Activated CD4-positive, alpha-beta T cell treated with anti-CD3 and anti-CD28 coated beads, Interleukin-2, amount 10 ng/mL, durations not matched to agents 24 days and 14 days (primary cell): ENCODE measurements at regions of chr19 and their contacts with region 1.

Region 1: GRCh38 chr19:8654591-8655339 is 24.3 kb downstream of the NFILZ start:
- DNase-seq: peak; percentile 88
- H3K4me3 Mint-ChIP-seq: peak overlapping the region; percentile 67
- H3K27ac Mint-ChIP-seq: peak overlapping the region; percentile 20
- H3K4me1 Mint-ChIP-seq: peaks cover 9% of the 10 kb centered on the region
- H3K27me3 Mint-ChIP-seq: peaks cover 3% of the 10 kb centered on the region

Region 2: GRCh38 chr19:8631425-8631819 is 23.3 kb before region 1 on chr19:
- intact Hi-C with region 1: no loop called
- DNase-seq: no peak
- H3K4me3 Mint-ChIP-seq: no peak overlapping the region
- H3K27ac Mint-ChIP-seq: no peak overlapping the region
- H3K4me1 Mint-ChIP-seq: no peaks in the 10 kb centered on the region
- H3K27me3 Mint-ChIP-seq: no peaks in the 10 kb centered on the region

Region 3: GRCh38 chr19:8665468-8666213 is 10.9 kb after region 1 on chr19:
- intact Hi-C with region 1: no loop called
- DNase-seq: peak; percentile 66
- H3K4me3 Mint-ChIP-seq: peak overlapping the region; percentile 4
- H3K27ac Mint-ChIP-seq: peak overlapping the region; percentile 61
- H3K4me1 Mint-ChIP-seq: peaks cover 37% of the 10 kb centered on the region
- H3K27me3 Mint-ChIP-seq: no peaks in the 10 kb centered on the region

Region 4: GRCh38 chr19:9075064-9075949 is 420.5 kb after region 1 on chr19:
- intact Hi-C with region 1: loop called (anchors 2 kb)
- DNase-seq: no peak
- H3K4me3 Mint-ChIP-seq: no peak overlapping the region
- H3K27ac Mint-ChIP-seq: no peak overlapping the region
- H3K4me1 Mint-ChIP-seq: peaks cover 2% of the 10 kb centered on the region
- H3K27me3 Mint-ChIP-seq: no peaks in the 10 kb centered on the region